Aorta (tissue), 5 donors: ENCODE measurements at regions of chr17 and their contacts with region 1.

Region 1: DNA sequence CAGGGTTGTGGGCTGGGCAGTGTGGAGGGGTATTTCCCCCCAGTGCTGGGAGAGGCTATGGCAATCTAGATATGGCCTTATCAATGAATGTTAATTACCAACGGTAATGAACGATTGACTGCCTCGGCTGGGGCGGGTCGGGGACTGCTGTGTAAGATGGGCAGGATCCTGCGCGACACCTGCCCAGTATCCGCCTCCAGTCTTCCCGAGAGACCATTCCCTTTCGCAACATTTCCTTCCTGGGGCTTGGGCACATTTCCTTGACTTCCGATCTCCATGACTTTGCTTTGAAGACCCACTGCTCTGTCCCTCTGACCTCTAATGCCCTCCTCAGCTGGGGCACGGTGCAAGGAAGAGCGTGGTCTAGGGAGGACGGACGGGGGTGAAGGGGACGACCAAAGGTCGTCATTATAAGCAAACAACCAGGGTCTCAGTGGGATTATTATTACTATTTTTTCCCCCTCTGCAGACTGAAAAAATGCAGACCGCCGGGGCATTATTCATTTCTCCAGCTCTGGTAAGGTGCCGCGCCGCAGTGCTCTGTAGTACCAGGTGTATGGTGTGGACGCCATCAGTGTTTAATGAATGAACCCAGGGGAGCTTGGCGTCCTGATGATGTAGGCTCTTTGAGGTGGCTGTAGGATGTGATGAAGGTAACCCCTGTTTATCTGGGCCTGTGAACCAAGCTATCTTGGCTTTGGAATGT is 506 bp downstream of the ATP5MC1 start:
- DNase-seq: peak in 1 of 2 donors; percentile 54
- ATAC-seq: peak; percentile 0
- H3K4me3 ChIP-seq: peak overlapping the region; percentile 20 to 30
- H3K27ac ChIP-seq: no peak overlapping the region
- H3K4me1 ChIP-seq: no peaks in the 10 kb centered on the region
- H3K27me3 ChIP-seq: no peaks in the 10 kb centered on the region

Region 2: DNA sequence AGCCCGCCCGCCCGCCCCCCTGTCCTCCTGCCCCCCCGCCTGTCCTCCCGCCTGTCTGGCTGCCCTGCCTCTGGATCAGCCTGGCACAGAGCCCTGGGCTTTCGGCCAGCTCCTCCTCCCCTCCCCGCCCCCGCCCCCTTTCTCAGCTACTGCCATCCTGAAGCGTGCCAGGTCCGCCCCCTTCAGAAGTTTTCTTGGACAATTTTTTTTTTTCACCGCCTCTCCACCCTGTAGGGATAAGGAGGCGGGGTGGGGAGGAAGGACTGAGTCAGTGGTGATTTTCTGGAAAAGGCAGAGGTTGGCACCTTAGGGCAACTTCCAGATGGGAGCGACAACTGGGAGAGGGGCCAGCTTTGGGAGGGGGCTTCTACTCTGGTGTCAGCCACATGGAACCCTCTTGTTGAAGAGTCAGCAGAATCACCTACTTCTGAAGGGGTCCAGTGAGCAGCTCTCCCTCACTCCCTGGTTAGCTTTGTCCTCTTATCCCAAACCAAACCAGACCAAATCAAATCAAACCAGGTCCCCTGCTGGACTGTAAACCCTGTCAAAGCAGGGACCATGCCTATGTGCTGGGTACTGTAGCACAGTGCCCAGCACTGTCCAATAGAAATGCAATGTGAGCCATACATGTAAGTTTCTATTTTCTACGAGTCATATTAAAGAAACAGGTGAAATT is 123.8 kb after region 1 on chr17:
- intact Hi-C with region 1: loop called in 1 of 2 experiments (anchors 5 kb)
- DNase-seq: peak; percentile 71 to 87
- ATAC-seq: no peak
- H3K4me3 ChIP-seq: no peak overlapping the region
- H3K27ac ChIP-seq: no peak overlapping the region
- H3K4me1 ChIP-seq: no peaks in the 10 kb centered on the region
- H3K27me3 ChIP-seq: no peaks in the 10 kb centered on the region